ENCODE measurements at regions of chr20 and their contacts with region 1.

Region 1: GRCh38 chr20:53915446-53916172 is 154.8 kb downstream of the BCAS1 start:
- DNase-seq: peak; percentile 94
- H3K4me3 ChIP-seq: peak overlapping the region; percentile 69
- H3K27ac ChIP-seq: peak overlapping the region; percentile 69
- H3K4me1 ChIP-seq: peaks cover 73% of the 10 kb centered on the region
- CTCF ChIP-seq: peak; percentile 97

Region 2: GRCh38 chr20:53578492-53579222 is 337.0 kb before region 1 on chr20:
- CTCF ChIA-PET with region 1: no interaction called
- POLR2A ChIA-PET with region 1: interaction called, 5 read pairs
- intact Hi-C with region 1: loop called (anchors 1 kb)
- DNase-seq: peak; percentile 93
- H3K4me3 ChIP-seq: peak overlapping the region; percentile 68
- H3K27ac ChIP-seq: peak overlapping the region; percentile 96
- H3K4me1 ChIP-seq: peaks cover 58% of the 10 kb centered on the region
- CTCF ChIP-seq: peak; percentile 97

Region 3: GRCh38 chr20:53750827-53751619 is 164.6 kb before region 1 on chr20:
- CTCF ChIA-PET with region 1: interaction called, 4 read pairs
- POLR2A ChIA-PET with region 1: interaction called, 3 read pairs
- intact Hi-C with region 1: loop called (anchors 2 kb)
- DNase-seq: peak; percentile 86
- H3K4me3 ChIP-seq: peak overlapping the region; percentile 27
- H3K27ac ChIP-seq: peak overlapping the region; percentile 73
- H3K4me1 ChIP-seq: peaks cover 56% of the 10 kb centered on the region
- CTCF ChIP-seq: 0 out of 2 replicates have a peak, but pooled peaks have one; percentile 16

Region 4: GRCh38 chr20:53809183-53809582 is 106.4 kb before region 1 on chr20:
- CTCF ChIA-PET with region 1: no interaction called
- POLR2A ChIA-PET with region 1: no interaction called
- intact Hi-C with region 1: no loop called
- DNase-seq: no peak
- H3K4me3 ChIP-seq: no peak overlapping the region
- H3K27ac ChIP-seq: no peak overlapping the region
- H3K4me1 ChIP-seq: no peaks in the 10 kb centered on the region
- CTCF ChIP-seq: no peak

Region 5: GRCh38 chr20:53891306-53891944 is 24.2 kb before region 1 on chr20:
- CTCF ChIA-PET with region 1: interaction called, 7 read pairs
- POLR2A ChIA-PET with region 1: interaction called, 98 read pairs
- intact Hi-C with region 1: loop called (anchors 1 kb)
- DNase-seq: no peak
- H3K4me3 ChIP-seq: no peak overlapping the region
- H3K27ac ChIP-seq: peak overlapping the region; percentile 63
- H3K4me1 ChIP-seq: peaks cover 70% of the 10 kb centered on the region
- CTCF ChIP-seq: no peak

Region 6: GRCh38 chr20:53905019-53905847 is 10.4 kb before region 1 on chr20:
- CTCF ChIA-PET with region 1: interaction called, 13 read pairs
- POLR2A ChIA-PET with region 1: interaction called, 98 read pairs
- intact Hi-C with region 1: no loop called
- DNase-seq: no peak
- H3K4me3 ChIP-seq: no peak overlapping the region
- H3K27ac ChIP-seq: no peak overlapping the region
- H3K4me1 ChIP-seq: peaks cover 72% of the 10 kb centered on the region
- CTCF ChIP-seq: no peak

Region 7: GRCh38 chr20:53934421-53935343 is 19.1 kb after region 1 on chr20:
- CTCF ChIA-PET with region 1: interaction called, 12 read pairs
- POLR2A ChIA-PET with region 1: interaction called, 83 read pairs
- intact Hi-C with region 1: no loop called
- DNase-seq: peak; percentile 88
- H3K4me3 ChIP-seq: peak overlapping the region; percentile 51
- H3K27ac ChIP-seq: peak overlapping the region; percentile 94
- H3K4me1 ChIP-seq: peaks cover 81% of the 10 kb centered on the region
- CTCF ChIP-seq: no peak